ENCODE measurements at regions of chr14 and their contacts with region 1.

Region 1: DNA sequence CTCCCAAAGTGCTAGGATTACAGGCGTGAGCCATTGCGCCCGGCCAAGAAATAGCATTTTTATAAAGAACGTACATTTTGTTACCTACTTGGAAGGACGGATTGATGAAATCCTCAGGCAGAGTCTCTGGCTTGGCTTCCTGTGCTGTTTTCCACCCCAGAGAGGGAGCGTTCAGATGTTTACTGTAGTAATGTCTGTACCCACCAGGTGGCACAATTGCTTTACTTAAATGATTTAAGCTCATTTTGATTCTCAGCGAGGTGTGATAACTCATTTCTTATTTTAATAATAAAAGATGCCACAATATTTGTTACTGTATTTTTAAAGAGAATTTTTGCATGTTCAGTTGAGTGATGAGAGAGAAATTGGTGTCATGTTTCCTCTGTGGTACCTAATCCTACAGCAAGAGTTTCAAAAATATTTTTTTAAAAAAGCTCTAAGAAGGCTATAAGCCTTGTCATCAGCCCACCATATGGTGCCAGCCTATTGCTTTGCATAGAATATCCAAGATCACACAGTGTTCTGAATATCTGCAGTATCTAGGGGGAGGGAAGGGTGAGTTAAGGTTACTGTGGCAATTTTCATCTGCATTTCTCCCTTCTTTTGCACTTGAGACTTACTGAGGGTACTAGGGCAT is 82.6 kb upstream of the TRAF3 start:
- DNase-seq: no peak
- H3K4me3 ChIP-seq: no peak overlapping the region
- CTCF ChIP-seq: peak; percentile 50

Region 2: DNA sequence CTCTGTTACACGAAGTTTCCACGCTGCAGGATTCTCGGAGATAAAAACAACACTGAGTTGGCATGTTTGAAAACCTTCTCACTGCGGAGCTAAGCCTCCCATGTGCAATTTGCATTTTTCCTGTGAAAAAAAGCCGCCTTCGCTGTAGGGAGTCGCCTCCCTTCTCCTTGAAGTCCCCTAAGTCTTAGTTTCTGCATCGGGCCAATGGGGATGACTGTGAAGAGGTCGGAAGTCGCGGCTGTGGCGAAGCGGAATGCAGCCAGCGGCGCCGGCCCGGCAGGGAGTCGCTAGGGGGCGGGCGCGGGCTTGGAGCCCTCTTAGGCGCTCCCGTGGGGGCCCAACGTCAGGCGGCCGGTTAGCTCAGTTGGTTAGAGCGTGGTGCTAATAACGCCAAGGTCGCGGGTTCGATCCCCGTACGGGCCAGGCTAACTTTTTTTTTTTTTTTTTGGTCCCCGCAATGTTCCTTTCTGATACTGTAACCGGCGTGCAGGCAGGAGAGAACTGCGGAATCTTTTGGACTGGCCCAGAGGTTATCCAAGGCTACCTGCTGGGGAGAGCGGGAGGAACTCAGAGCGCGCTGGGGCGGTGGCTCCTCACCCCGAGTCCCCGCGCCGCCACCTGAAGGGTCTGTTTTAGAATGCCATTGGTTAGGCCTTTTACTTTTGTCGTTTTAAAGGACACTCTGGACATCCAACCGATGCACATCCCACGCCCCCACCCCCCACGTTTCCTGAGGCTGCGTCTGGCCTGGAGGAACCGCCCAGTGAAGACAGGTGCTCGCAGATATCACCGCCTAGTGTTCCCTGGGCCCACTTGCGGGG is 377.7 kb before region 1 on chr14:
- CTCF ChIA-PET with region 1: no interaction called
- POLR2A ChIA-PET with region 1: no interaction called
- DNase-seq: no peak
- H3K4me3 ChIP-seq: peak overlapping the region; percentile 64
- CTCF ChIP-seq: peak; percentile 94

Region 3: GRCh38 chr14:102524466-102525218 is 170.0 kb before region 1 on chr14:
- CTCF ChIA-PET with region 1: interaction called, 27 read pairs
- POLR2A ChIA-PET with region 1: no interaction called
- DNase-seq: peak; percentile 78
- H3K4me3 ChIP-seq: peak overlapping the region; percentile 73
- CTCF ChIP-seq: peak; percentile 99

Region 4: GRCh38 chr14:102708494-102708893 is 13.8 kb after region 1 on chr14:
- CTCF ChIA-PET with region 1: interaction called, 47 read pairs
- POLR2A ChIA-PET with region 1: no interaction called
- DNase-seq: no peak
- H3K4me3 ChIP-seq: no peak overlapping the region
- CTCF ChIP-seq: no peak

Region 5: GRCh38 chr14:102917469-102918211 is 223.0 kb after region 1 on chr14:
- CTCF ChIA-PET with region 1: interaction called, 62 read pairs
- POLR2A ChIA-PET with region 1: no interaction called
- DNase-seq: no peak
- H3K4me3 ChIP-seq: no peak overlapping the region
- CTCF ChIP-seq: peak; percentile 74

Region 6: DNA sequence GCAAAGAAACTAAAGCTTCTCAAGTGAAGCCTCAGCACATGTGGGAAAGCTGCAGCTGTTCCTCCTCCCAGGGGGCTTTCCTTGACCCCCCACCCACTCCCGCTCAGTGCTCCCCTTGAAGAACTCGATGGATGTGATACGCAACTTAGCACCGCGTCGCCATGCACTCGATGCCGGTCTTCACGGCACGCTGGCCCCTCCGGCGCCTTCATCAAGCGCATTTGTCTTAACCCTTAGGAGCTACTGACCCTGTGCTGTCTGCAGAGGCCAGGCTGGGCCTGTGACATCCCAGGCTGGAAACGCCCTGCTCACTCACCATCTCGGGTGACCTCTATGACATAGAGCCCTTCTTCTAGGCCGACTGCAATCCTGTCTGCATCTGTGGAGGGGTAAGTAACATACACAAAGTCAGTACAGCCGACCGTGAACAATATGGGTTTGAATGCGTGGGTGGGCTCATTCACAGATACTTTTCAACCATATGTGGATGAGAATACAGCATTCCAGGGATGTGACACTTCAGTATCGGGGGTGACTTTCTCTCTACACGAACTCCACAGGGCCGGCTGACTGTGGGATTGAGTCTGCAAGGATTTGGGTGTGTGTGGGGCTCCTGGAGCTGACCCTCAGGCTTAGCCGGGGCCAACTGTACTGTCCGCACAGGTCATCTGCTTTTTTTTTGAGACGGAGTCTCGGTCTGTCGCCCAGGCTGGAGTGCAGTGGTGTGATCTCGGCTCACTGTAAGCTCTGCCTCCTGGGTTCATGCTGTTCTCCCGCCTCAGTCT is 250.9 kb after region 1 on chr14:
- CTCF ChIA-PET with region 1: interaction called, 30 read pairs
- POLR2A ChIA-PET with region 1: no interaction called
- DNase-seq: peak; percentile 21
- H3K4me3 ChIP-seq: no peak overlapping the region
- CTCF ChIP-seq: no peak